ENCODE measurements at regions of chrX and their contacts with region 1.

Region 1: GRCh38 chrX:52995135-52996020 is 37.1 kb upstream of the FAM156A start:
- DNase-seq: peak; percentile 78
- ATAC-seq: peak; percentile 99
- H3K4me3 ChIP-seq: peak overlapping the region; percentile 71
- H3K27ac ChIP-seq: peak overlapping the region; percentile 94
- H3K4me1 ChIP-seq: no peaks in the 10 kb centered on the region
- H3K27me3 ChIP-seq: no peaks in the 10 kb centered on the region
- CTCF ChIP-seq: peak; percentile 43 to 61 (median 60)
- EP300 ChIP-seq: no peak
- POLR2A ChIP-seq: peak; percentile 48
- RAD21 ChIP-seq: no peak

Region 2: GRCh38 chrX:52346512-52347194 is 648.7 kb before region 1 on chrX:
- CTCF ChIA-PET with region 1: no interaction called
- POLR2A ChIA-PET with region 1: no interaction called
- RAD21 ChIA-PET with region 1: no interaction called
- SMC1A ChIA-PET with region 1: no interaction called
- in situ Hi-C with region 1: loop called (anchors 25 kb)
- intact Hi-C with region 1: no loop called
- DNase-seq: no peak
- ATAC-seq: no peak
- H3K4me3 ChIP-seq: no peak overlapping the region
- H3K27ac ChIP-seq: no peak overlapping the region
- H3K4me1 ChIP-seq: no peaks in the 10 kb centered on the region
- H3K27me3 ChIP-seq: no peaks in the 10 kb centered on the region
- CTCF ChIP-seq: no peak
- EP300 ChIP-seq: no peak
- POLR2A ChIP-seq: no peak
- RAD21 ChIP-seq: no peak

Region 3: DNA sequence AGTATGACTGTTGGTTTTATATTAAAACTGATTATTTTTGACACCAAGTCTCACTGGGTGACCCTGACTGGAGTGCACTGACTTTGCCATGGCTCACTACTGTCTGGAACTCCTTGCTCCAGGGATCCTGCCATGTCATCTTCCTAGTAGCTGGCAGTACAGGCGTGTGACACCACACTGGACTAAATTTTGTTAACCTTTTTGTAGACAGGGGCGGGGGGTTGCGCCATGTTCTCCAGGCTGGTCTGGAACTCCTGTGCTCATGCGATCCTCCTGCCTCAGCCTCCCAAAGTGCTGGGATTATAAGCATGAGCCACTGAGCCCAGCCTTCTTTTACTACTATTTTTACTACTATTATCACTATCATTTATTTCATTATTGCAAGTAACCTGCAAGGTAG is 490.8 kb before region 1 on chrX:
- CTCF ChIA-PET with region 1: no interaction called
- POLR2A ChIA-PET with region 1: no interaction called
- RAD21 ChIA-PET with region 1: no interaction called
- SMC1A ChIA-PET with region 1: no interaction called
- in situ Hi-C with region 1: no loop called
- intact Hi-C with region 1: no loop called
- DNase-seq: no peak
- ATAC-seq: no peak
- H3K4me3 ChIP-seq: no peak overlapping the region
- H3K27ac ChIP-seq: no peak overlapping the region
- H3K4me1 ChIP-seq: no peaks in the 10 kb centered on the region
- H3K27me3 ChIP-seq: no peaks in the 10 kb centered on the region; a peak in 1 of 4 replicates
- CTCF ChIP-seq: no peak
- EP300 ChIP-seq: no peak
- POLR2A ChIP-seq: no peak
- RAD21 ChIP-seq: no peak